Naive thymus-derived CD4-positive, alpha-beta T cell (primary cell): ENCODE measurements at regions of chr1 and their contacts with region 1.

Region 1: GRCh38 chr1:37682334-37682987 is 9.9 kb upstream of the CDCA8 start:
- DNase-seq: peak; percentile 61 to 80 (median 74)
- ATAC-seq: peak; percentile 95
- H3K4me3 ChIP-seq: no peak overlapping the region
- H3K4me3 Mint-ChIP-seq: no peak overlapping the region
- H3K27ac ChIP-seq: no peak overlapping the region
- H3K27ac Mint-ChIP-seq: peak overlapping the region in 6 of 9 donors; percentile 61 to 93 (median 75)
- H3K4me1 ChIP-seq: no peaks in the 10 kb centered on the region
- H3K4me1 Mint-ChIP-seq: peaks cover 0 to 9% (median 4%) of the 10 kb centered on the region in 7 donors
- H3K27me3 ChIP-seq: no peaks in the 10 kb centered on the region
- H3K27me3 Mint-ChIP-seq: peaks cover 0 to 3% (median 0%) of the 10 kb centered on the region in 5 donors

Region 2: GRCh38 chr1:37325010-37325409 is 357.5 kb before region 1 on chr1:
- CTCF ChIA-PET with region 1: no interaction called
- POLR2A ChIA-PET with region 1: no interaction called
- intact Hi-C with region 1: no loop called
- DNase-seq: no peak
- ATAC-seq: no peak
- H3K4me3 ChIP-seq: no peak overlapping the region
- H3K4me3 Mint-ChIP-seq: no peak overlapping the region
- H3K27ac ChIP-seq: no peak overlapping the region
- H3K27ac Mint-ChIP-seq: peak overlapping the region in 1 of 9 donors; percentile 43
- H3K4me1 ChIP-seq: no peaks in the 10 kb centered on the region
- H3K4me1 Mint-ChIP-seq: no peaks in the 10 kb centered on the region
- H3K27me3 ChIP-seq: peaks cover 0 to 3% of the 10 kb centered on the region in 2 donors
- H3K27me3 Mint-ChIP-seq: peaks cover 6 to 60% (median 42%) of the 10 kb centered on the region in 5 donors

Region 3: DNA sequence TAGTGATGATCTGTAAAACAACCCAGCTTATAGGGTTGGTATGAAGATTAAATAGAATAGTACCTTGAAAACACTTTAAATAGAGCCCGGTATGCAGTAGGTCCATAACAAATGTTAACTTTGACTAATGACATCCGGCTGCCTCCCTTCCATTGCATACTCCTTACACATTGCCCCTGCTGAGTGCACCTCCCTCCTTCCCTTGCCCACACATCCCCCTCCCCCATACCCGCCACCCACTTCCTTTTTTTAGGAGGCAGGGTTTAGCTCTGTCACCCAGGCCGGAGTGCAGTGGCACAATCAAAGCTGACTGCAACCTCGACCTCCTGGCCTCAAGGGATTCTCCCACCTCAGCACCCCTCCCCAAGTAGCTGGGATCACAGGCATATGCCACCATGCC is 232.5 kb before region 1 on chr1:
- CTCF ChIA-PET with region 1: interaction called, 5 read pairs
- POLR2A ChIA-PET with region 1: no interaction called
- intact Hi-C with region 1: loop called (anchors 1 kb)
- DNase-seq: peak in 6 of 9 donors; percentile 20 to 48 (median 39)
- ATAC-seq: peak; percentile 82
- H3K4me3 ChIP-seq: no peak overlapping the region
- H3K4me3 Mint-ChIP-seq: peak overlapping the region in 6 of 10 donors; percentile 29 to 65 (median 48)
- H3K27ac ChIP-seq: no peak overlapping the region
- H3K27ac Mint-ChIP-seq: peak overlapping the region in 7 of 9 donors; percentile 10 to 77 (median 38)
- H3K4me1 ChIP-seq: peaks cover 0 to 8% of the 10 kb centered on the region in 2 donors
- H3K4me1 Mint-ChIP-seq: peaks cover 5 to 17% (median 13%) of the 10 kb centered on the region in 7 donors
- H3K27me3 ChIP-seq: no peaks in the 10 kb centered on the region
- H3K27me3 Mint-ChIP-seq: peaks cover 0 to 15% (median 8%) of the 10 kb centered on the region in 5 donors

Region 4: DNA sequence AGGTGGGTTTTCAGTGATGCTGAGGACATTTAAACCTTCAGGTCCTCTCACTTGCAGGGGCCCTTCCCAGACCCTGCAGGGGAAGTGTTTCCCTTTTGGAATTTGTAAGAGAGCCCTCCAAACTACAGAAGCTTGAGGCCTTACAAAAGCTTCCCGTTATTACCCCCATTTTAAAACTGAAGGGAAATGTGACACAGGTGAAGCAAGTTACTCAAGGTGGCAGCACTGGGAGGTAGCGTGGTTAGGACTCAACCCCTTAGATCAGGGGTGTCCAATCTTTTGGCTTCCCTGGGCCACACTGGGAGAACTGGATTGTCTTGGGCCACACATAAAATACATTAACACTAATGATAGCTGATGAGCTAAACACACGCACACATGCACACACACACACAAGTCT is 223.9 kb before region 1 on chr1:
- CTCF ChIA-PET with region 1: interaction called, 9 read pairs
- POLR2A ChIA-PET with region 1: no interaction called
- intact Hi-C with region 1: loop called (anchors 1 kb)
- DNase-seq: no peak
- ATAC-seq: no peak
- H3K4me3 ChIP-seq: no peak overlapping the region
- H3K4me3 Mint-ChIP-seq: no peak overlapping the region
- H3K27ac ChIP-seq: no peak overlapping the region
- H3K27ac Mint-ChIP-seq: peak overlapping the region in 3 of 9 donors; percentile 30 to 78 (median 46)
- H3K4me1 ChIP-seq: no peaks in the 10 kb centered on the region
- H3K4me1 Mint-ChIP-seq: peaks cover 4 to 16% (median 11%) of the 10 kb centered on the region in 7 donors
- H3K27me3 ChIP-seq: no peaks in the 10 kb centered on the region
- H3K27me3 Mint-ChIP-seq: no peaks in the 10 kb centered on the region

Region 5: DNA sequence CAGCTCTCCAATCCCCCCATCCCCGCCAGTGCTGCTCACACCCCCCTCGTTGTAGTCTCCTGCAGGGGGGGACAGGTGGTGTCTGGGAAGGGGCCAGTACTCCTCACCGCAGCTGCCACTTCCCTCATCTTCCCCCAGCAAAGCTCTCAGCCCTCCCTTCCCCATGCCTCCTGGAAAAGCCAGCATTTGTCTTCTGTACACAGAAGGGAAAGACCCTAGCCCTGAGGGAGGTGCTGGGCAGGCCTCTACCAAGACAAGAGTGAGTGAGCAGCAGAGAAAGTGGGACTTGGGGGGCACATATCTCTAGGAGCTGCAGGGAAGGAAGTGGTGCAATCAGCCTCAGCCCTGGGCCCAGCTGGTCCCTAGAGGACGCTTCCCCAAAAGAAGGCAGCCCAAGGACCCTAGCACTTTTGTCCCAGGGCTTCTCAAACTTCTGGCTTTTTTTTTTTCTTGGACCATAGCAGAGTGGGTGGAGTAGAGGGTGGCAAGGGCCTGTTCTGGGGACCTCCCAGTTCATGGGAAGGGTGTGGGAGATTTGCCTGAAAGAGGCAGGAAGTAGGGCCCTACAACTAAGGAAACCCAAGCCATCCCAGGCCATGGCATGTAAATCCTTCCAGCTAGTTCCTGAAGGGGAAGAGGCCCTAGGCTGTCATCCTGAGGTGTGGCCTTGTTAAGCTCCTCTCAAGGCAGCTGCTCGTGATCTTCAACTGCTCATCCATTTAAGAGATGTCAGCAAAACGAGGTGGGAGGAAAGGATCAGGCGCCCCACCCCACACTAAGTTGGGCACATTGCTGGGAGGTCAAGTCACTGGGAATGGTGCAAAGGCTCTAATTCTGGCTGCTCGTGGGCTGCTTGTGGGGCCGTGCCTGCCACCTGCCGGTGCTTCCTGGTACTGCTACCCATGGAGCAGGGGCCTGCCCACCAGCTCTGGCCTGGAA is 195.5 kb before region 1 on chr1:
- CTCF ChIA-PET with region 1: interaction called, 5 read pairs
- POLR2A ChIA-PET with region 1: no interaction called
- intact Hi-C with region 1: loop called in 1 of 2 experiments (anchors 1 kb)
- DNase-seq: peak; percentile 57 to 85 (median 72)
- ATAC-seq: peak; percentile 82
- H3K4me3 ChIP-seq: no peak overlapping the region
- H3K4me3 Mint-ChIP-seq: peak overlapping the region in 1 of 10 donors; percentile 66
- H3K27ac ChIP-seq: peak overlapping the region; percentile 54
- H3K27ac Mint-ChIP-seq: peak overlapping the region; percentile 10 to 91 (median 72)
- H3K4me1 ChIP-seq: peaks cover 9 to 11% of the 10 kb centered on the region in 2 donors
- H3K4me1 Mint-ChIP-seq: peaks cover 11 to 26% (median 17%) of the 10 kb centered on the region in 7 donors
- H3K27me3 ChIP-seq: no peaks in the 10 kb centered on the region
- H3K27me3 Mint-ChIP-seq: no peaks in the 10 kb centered on the region

Region 6: DNA sequence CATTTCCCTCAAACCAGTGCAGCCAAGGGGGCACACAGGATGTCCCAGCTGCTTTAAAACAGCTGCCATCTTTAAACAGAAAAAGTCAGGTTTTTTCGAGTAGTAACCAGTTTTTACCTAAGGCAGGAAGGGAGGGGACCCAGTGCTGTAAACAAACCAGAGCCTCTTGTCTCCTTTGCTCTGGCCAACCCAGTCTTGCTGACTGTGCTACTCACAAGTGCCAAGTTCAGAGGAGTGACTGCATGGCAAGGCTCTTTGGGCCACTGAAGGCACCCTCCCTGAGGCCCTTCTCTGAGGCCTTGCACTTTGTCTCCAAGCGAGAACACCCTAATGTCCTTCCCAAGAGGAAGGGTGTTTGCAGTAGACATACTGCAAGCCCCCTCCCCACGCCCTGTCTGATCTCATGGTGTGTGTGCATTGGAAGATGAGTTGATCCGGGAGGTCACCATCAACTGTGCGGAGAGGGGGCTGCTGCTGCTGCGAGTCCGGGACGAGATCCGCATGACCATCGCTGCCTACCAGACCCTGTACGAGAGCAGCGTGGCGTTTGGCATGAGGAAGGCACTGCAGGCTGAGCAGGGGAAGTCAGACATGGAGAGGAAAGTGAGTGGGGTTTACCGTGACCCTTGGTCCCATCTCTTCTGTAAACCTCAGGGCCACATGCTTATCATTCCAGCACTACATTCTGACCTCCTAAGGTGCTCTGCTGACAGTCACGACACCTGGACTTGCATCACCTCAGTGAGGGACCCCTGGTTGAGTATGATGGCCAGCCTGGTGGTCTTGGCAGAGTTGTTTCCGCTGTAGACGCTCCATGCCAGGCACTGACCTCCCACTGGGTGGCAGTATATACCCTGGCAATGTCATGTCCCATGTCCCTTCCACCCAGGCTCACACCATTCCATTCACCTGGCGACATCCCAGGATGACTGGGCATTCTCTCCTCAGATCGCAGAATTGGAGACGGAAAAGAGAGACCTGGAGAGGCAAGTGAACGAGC is 121.0 kb before region 1 on chr1:
- CTCF ChIA-PET with region 1: interaction called, 6 read pairs
- POLR2A ChIA-PET with region 1: no interaction called
- intact Hi-C with region 1: loop called (anchors 1 kb)
- DNase-seq: peak in 5 of 9 donors; percentile 11 to 33 (median 17)
- ATAC-seq: peak; percentile 57
- H3K4me3 ChIP-seq: no peak overlapping the region
- H3K4me3 Mint-ChIP-seq: no peak overlapping the region
- H3K27ac ChIP-seq: no peak overlapping the region
- H3K27ac Mint-ChIP-seq: peak overlapping the region in 7 of 9 donors; percentile 12 to 72 (median 56)
- H3K4me1 ChIP-seq: no peaks in the 10 kb centered on the region
- H3K4me1 Mint-ChIP-seq: peaks cover 0 to 5% (median 0%) of the 10 kb centered on the region in 7 donors
- H3K27me3 ChIP-seq: no peaks in the 10 kb centered on the region
- H3K27me3 Mint-ChIP-seq: peaks cover 0 to 6% (median 0%) of the 10 kb centered on the region in 5 donors

Region 7: DNA sequence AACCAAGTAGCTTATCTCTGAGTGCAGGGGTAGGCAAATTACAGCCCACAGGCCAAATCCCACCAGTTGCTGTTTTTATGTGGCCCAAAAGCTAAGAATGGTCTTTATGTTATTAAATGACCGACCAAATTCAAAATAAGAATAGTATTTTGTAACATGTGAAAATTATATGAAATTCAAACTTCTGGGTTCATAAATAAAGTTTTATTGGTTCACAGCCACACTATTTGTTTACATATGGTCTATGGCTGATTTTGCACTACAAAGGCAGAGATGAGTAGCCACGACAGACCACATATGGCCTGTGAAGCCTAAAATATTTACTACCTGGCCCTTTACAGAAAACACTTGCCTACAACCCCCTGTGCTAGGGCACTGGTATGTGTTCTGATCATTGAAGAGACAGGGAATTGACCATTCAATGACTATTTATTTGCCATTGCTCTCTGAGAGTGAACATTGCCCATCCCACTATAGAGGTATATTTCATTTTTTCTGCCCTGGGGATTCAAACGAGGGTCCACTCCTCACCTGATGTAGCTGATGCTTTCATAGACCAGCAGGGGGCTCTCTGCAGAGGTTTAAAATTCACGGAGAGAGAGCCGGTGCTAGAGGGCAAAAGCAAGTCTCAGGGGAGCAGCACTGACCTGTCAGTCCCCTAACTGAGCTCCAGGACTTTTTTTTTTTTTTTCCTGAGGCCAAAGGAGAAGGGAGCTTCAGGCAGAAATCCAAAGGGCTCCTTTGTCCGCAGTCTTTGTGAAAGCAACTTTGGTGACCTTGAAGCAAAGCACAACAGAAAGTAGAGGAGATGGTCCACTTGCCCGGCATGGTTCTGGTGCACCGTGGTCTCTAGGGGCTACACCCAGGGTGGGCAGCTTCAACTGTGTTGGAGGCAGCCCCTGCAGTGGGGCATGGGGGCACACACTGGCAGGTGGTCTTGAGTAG is 79.4 kb before region 1 on chr1:
- CTCF ChIA-PET with region 1: interaction called, 60 read pairs
- POLR2A ChIA-PET with region 1: interaction called, 7 read pairs
- intact Hi-C with region 1: loop called (anchors 1 kb)
- DNase-seq: peak in 7 of 9 donors; percentile 10 to 64 (median 47)
- ATAC-seq: peak; percentile 78
- H3K4me3 ChIP-seq: no peak overlapping the region
- H3K4me3 Mint-ChIP-seq: no peak overlapping the region
- H3K27ac ChIP-seq: no peak overlapping the region
- H3K27ac Mint-ChIP-seq: no peak overlapping the region
- H3K4me1 ChIP-seq: no peaks in the 10 kb centered on the region
- H3K4me1 Mint-ChIP-seq: peaks cover 0 to 5% (median 0%) of the 10 kb centered on the region in 7 donors
- H3K27me3 ChIP-seq: no peaks in the 10 kb centered on the region
- H3K27me3 Mint-ChIP-seq: peaks cover 0 to 32% (median 0%) of the 10 kb centered on the region in 5 donors

Region 8: GRCh38 chr1:37840711-37841110 is 158.2 kb after region 1 on chr1:
- CTCF ChIA-PET with region 1: no interaction called
- POLR2A ChIA-PET with region 1: no interaction called
- intact Hi-C with region 1: no loop called
- DNase-seq: no peak
- ATAC-seq: no peak
- H3K4me3 ChIP-seq: no peak overlapping the region
- H3K4me3 Mint-ChIP-seq: no peak overlapping the region
- H3K27ac ChIP-seq: no peak overlapping the region
- H3K27ac Mint-ChIP-seq: no peak overlapping the region
- H3K4me1 ChIP-seq: no peaks in the 10 kb centered on the region
- H3K4me1 Mint-ChIP-seq: peaks cover 6 to 23% (median 18%) of the 10 kb centered on the region in 7 donors
- H3K27me3 ChIP-seq: no peaks in the 10 kb centered on the region
- H3K27me3 Mint-ChIP-seq: no peaks in the 10 kb centered on the region